ENCODE measurements at regions of chr4 and their contacts with region 1.

Region 1: DNA sequence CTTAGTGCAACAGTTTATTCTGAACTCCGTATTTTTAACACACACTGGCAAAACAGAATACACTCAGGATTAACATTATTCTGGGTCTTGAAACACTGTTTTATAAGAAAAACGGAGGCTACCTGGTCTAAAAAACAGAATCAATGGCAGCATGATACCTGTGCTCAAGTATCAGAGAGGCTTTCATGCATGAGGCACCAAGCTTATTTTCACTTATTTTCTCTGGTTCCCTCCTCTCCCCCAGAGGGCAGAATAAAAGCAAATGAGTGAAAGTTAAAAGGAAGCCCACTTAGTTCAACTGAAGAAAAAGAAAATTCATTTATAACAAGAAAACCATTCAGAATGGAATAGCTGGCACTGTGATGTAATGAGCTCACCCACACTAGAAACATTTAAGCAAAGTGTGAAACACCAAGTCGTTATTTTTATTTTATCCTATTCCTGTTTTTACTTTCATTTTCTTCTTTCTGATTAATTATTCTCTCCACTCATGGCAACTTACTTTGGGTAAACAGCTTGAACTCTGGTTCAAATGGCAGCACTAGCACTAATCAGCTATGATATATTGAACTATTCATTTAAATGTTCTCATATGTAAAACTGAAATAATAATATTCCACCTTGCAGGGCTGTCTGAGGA is 211.8 kb downstream of the PPP3CA start:
- DNase-seq: peak; percentile 10
- H3K4me3 ChIP-seq: peak overlapping the region; percentile 26
- H3K27ac ChIP-seq: no peak overlapping the region
- H3K4me1 ChIP-seq: peaks cover 31% of the 10 kb centered on the region
- CTCF ChIP-seq: peak; percentile 35; the same call in 1 of the 2 replicates

Region 2: GRCh38 chr4:101123231-101123630 is 12.3 kb before region 1 on chr4:
- CTCF ChIA-PET with region 1: no interaction called
- POLR2A ChIA-PET with region 1: interaction called, 11 read pairs
- intact Hi-C with region 1: no loop called
- DNase-seq: no peak
- H3K4me3 ChIP-seq: no peak overlapping the region
- H3K27ac ChIP-seq: no peak overlapping the region
- H3K4me1 ChIP-seq: peaks cover 37% of the 10 kb centered on the region
- CTCF ChIP-seq: no peak

Region 3: DNA sequence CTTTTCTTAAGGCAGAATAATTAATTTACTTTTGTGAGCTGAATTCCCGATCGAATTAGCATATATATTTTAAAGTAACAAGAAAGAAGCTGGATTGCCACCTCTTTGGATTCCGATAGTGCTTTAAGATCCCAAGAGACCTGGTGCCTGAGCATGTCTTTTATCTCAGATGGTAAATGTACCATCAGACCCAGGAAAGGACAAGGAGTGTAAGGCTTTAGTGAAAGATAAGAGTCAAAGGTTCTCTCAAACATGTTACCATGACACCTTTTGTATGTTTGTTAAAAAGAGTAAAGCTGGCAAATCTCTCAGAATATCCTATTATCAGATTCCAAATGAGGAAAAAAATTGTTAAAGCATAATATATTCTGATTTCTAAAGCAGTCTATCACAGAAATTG is 13.1 kb after region 1 on chr4:
- CTCF ChIA-PET with region 1: no interaction called
- POLR2A ChIA-PET with region 1: interaction called, 28 read pairs
- intact Hi-C with region 1: no loop called
- DNase-seq: no peak
- H3K4me3 ChIP-seq: no peak overlapping the region
- H3K27ac ChIP-seq: no peak overlapping the region
- H3K4me1 ChIP-seq: peaks cover 10% of the 10 kb centered on the region
- CTCF ChIP-seq: no peak

Region 4: GRCh38 chr4:101175896-101176676 is 40.6 kb after region 1 on chr4:
- CTCF ChIA-PET with region 1: no interaction called
- POLR2A ChIA-PET with region 1: no interaction called
- intact Hi-C with region 1: no loop called
- DNase-seq: no peak
- H3K4me3 ChIP-seq: no peak overlapping the region
- H3K27ac ChIP-seq: no peak overlapping the region
- H3K4me1 ChIP-seq: no peaks in the 10 kb centered on the region
- CTCF ChIP-seq: no peak

Measured in OCI-LY7 (cell line).